ENCODE measurements at regions of chr17 and their contacts with region 1.

Region 1: DNA sequence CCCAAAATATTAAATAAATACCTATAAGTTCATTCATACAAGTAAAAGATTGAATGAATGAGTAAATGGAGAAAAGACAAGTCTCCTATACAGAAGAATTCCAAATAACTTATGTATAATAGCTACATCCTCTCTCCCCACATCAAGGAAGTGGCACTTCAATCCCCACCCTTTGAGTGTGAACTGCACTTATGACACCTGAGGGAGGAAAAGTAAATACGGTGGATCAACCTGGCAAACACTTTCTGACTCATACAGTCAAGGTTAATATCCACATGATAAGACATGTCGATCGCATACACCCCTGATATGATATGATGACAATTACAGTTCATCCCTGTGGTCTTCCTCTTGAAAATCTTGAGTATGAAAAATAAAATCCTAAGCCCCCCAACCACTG is 18.0 kb downstream of the SLFN12L start:
- DNase-seq: no peak
- H3K4me3 Mint-ChIP-seq: peak overlapping the region; percentile 31
- H3K27ac Mint-ChIP-seq: peak overlapping the region; percentile 38
- H3K4me1 Mint-ChIP-seq: peaks cover 90% of the 10 kb centered on the region
- H3K27me3 Mint-ChIP-seq: no peaks in the 10 kb centered on the region

Region 2: GRCh38 chr17:35312790-35313711 is 206.4 kb before region 1 on chr17:
- CTCF ChIA-PET with region 1: interaction called, 14 read pairs
- POLR2A ChIA-PET with region 1: interaction called, 7 read pairs
- DNase-seq: peak; percentile 84
- H3K4me3 Mint-ChIP-seq: peak overlapping the region; percentile 83
- H3K27ac Mint-ChIP-seq: peak overlapping the region; percentile 90
- H3K4me1 Mint-ChIP-seq: peaks cover 42% of the 10 kb centered on the region
- H3K27me3 Mint-ChIP-seq: peaks cover 3% of the 10 kb centered on the region

Region 3: GRCh38 chr17:35531160-35531559 is 11.7 kb after region 1 on chr17:
- CTCF ChIA-PET with region 1: interaction called, 43 read pairs
- POLR2A ChIA-PET with region 1: interaction called, 108 read pairs
- DNase-seq: no peak
- H3K4me3 Mint-ChIP-seq: peak overlapping the region; percentile 65
- H3K27ac Mint-ChIP-seq: peak overlapping the region; percentile 71
- H3K4me1 Mint-ChIP-seq: peaks cover 62% of the 10 kb centered on the region
- H3K27me3 Mint-ChIP-seq: no peaks in the 10 kb centered on the region

Region 4: GRCh38 chr17:35578197-35578928 is 58.9 kb after region 1 on chr17 and contains the start of gene PEX12:
- CTCF ChIA-PET with region 1: no interaction called
- POLR2A ChIA-PET with region 1: interaction called, 10 read pairs
- DNase-seq: peak; percentile 91
- H3K4me3 Mint-ChIP-seq: peak within 1 kb of the TSS; percentile 94
- H3K27ac Mint-ChIP-seq: peak within 1 kb of the TSS; percentile 94
- H3K4me1 Mint-ChIP-seq: peaks cover 29% of the 10 kb centered on the region
- H3K27me3 Mint-ChIP-seq: peaks cover under 1% of the 10 kb centered on the region
- total RNA-seq, gene PEX12: 3.8 to 4.5 TPM